Mammary epithelial cell (primary cell): ENCODE measurements at regions of chr6 and their contacts with region 1.

Region 1: GRCh38 chr6:38773338-38773737 is 58.2 kb downstream of the DNAH8 start:
- DNase-seq: peak; percentile 41
- H3K4me3 ChIP-seq: no peak overlapping the region
- H3K27ac ChIP-seq: no peak overlapping the region
- H3K4me1 ChIP-seq: peaks cover 16% of the 10 kb centered on the region
- H3K27me3 ChIP-seq: no peaks in the 10 kb centered on the region
- CTCF ChIP-seq: peak; percentile 88

Region 2: GRCh38 chr6:38713812-38714211 is 59.5 kb before region 1 on chr6:
- CTCF ChIA-PET with region 1: no interaction called
- dilution Hi-C with region 1: loop called (anchors 5 kb)
- in situ Hi-C with region 1: no loop called
- intact Hi-C with region 1: no loop called
- DNase-seq: peak; percentile 9
- H3K4me3 ChIP-seq: no peak overlapping the region
- H3K27ac ChIP-seq: no peak overlapping the region
- H3K4me1 ChIP-seq: peaks cover 7% of the 10 kb centered on the region
- H3K27me3 ChIP-seq: no peaks in the 10 kb centered on the region
- CTCF ChIP-seq: no peak

Region 3: GRCh38 chr6:38755874-38756273 is 17.5 kb before region 1 on chr6:
- CTCF ChIA-PET with region 1: interaction called, 3 read pairs
- dilution Hi-C with region 1: no loop called
- in situ Hi-C with region 1: no loop called
- intact Hi-C with region 1: loop called (anchors 1 kb)
- DNase-seq: peak; percentile 91
- H3K4me3 ChIP-seq: no peak overlapping the region
- H3K27ac ChIP-seq: peak overlapping the region; percentile 99
- H3K4me1 ChIP-seq: peaks cover 12% of the 10 kb centered on the region
- H3K27me3 ChIP-seq: no peaks in the 10 kb centered on the region
- CTCF ChIP-seq: no peak

Region 4: DNA sequence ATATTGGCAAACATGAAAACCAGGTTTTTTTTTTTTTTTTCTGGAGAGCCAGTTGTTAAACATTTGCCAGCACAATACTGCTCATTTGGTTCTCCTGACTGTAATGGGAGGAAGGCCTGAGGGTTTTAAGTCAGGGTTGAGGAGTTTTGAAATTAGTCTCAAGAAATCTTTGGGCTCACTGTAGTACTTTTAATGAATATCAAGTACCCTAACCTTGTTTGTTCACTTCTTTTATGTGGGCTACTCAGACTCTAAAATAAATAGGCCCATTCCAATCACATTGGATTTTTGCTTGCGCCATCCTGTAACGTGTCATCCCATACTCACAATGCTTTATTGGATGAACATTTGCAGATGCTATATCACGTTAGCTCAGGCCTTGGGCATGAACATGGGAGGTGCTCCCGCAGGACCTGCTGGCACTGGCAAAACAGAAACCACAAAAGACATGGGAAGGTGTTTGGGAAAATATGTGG is 88.6 kb after region 1 on chr6:
- CTCF ChIA-PET with region 1: no interaction called
- dilution Hi-C with region 1: no loop called
- in situ Hi-C with region 1: no loop called
- intact Hi-C with region 1: no loop called
- DNase-seq: peak; percentile 75
- H3K4me3 ChIP-seq: no peak overlapping the region
- H3K27ac ChIP-seq: no peak overlapping the region
- H3K4me1 ChIP-seq: peaks cover 7% of the 10 kb centered on the region
- H3K27me3 ChIP-seq: no peaks in the 10 kb centered on the region
- CTCF ChIP-seq: no peak